Heart right ventricle (tissue), 16 donors: ENCODE measurements at regions of chr21 and their contacts with region 1.

Region 1: DNA sequence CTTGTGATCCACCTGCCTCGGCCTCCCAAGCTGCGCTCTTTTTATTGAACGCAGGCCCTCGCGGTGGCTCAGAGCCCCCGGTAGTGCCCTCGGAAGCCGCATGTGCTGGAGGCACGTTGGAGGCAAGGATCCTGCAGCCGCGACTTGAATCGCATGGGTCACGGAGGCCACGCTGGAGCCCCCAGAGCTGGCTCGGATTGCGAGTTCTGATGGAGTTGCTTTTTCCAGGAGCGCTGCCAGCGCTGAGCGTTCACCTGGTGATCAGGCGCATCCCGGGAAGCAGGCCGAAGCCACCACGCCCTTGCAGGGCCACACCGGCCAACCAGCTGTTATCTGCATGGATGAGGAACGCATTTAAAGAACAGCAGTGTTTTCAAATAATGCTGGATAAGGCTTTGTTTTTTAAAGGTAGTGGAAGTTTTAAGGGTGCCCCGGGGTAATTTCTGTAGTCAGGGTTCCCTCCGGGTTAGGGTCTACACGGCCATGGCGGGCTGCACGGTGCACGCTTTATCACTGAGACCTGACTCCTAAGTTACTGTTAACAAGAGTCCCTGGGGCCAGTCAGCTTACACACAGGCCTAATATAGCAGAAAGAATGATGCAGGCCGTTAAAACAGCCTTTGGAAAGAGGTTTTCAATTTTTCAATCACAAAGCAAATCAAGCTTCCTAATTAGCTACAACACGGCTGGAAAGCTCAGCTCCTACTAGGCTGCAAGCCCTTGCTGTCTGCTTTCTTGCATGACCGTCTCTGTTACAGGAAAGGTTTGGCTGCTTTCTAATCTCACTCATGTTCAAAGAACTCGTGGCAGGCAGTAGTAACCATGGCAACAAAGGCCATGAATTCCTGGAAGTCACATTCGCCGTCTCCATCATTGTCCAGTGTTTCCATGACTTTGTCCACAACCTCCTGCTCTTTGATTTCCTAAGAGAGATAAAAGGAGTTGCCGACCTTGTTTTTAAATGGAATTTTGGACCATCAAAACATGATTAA is 6.0 kb downstream of the S100B start:
- DNase-seq: peak in 1 of 2 donors; percentile 80
- ATAC-seq: peak; percentile 55 to 95 (median 83)
- H3K4me3 ChIP-seq: peak overlapping the region in 1 of 10 donors; percentile 21
- H3K27ac ChIP-seq: peak overlapping the region in 6 of 10 donors; percentile 48 to 62 (median 56)
- H3K4me1 ChIP-seq: peaks cover 4 to 27% (median 16%) of the 10 kb centered on the region in 9 donors
- H3K27me3 ChIP-seq: no peaks in the 10 kb centered on the region
- CTCF ChIP-seq: no peak

Region 2: GRCh38 chr21:46559291-46559983 is 39.4 kb before region 1 on chr21:
- intact Hi-C with region 1: loop called in 1 of 10 experiments (anchors 5 kb)
- DNase-seq: no peak
- ATAC-seq: peak in 5 of 8 donors; percentile 27 to 46 (median 30)
- H3K4me3 ChIP-seq: peak overlapping the region in 2 of 10 donors; percentile 1 to 20
- H3K27ac ChIP-seq: peak overlapping the region in 9 of 10 donors; percentile 33 to 73 (median 56)
- H3K4me1 ChIP-seq: peaks cover 0 to 36% (median 18%) of the 10 kb centered on the region in 9 donors
- H3K27me3 ChIP-seq: no peaks in the 10 kb centered on the region
- CTCF ChIP-seq: no peak

Region 3: GRCh38 chr21:46635324-46636172 is 36.7 kb after region 1 on chr21 and contains the start of gene PRMT2:
- intact Hi-C with region 1: loop called in 1 of 10 experiments (anchors 1 kb)
- DNase-seq: peak; percentile 97 to 99
- ATAC-seq: peak; percentile 96 to 98 (median 98)
- H3K4me3 ChIP-seq: peak within 1 kb of the TSS; percentile 72 to 96 (median 86)
- H3K27ac ChIP-seq: peak within 1 kb of the TSS; percentile 87 to 99 (median 98)
- H3K4me1 ChIP-seq: peaks cover 0 to 52% (median 43%) of the 10 kb centered on the region in 9 donors
- H3K27me3 ChIP-seq: no peaks in the 10 kb centered on the region
- CTCF ChIP-seq: no peak
- total RNA-seq, gene PRMT2: 40.3 to 70.1 (median 56.9) TPM